ENCODE measurements at regions of chr13 and their contacts with region 1.

Region 1: DNA sequence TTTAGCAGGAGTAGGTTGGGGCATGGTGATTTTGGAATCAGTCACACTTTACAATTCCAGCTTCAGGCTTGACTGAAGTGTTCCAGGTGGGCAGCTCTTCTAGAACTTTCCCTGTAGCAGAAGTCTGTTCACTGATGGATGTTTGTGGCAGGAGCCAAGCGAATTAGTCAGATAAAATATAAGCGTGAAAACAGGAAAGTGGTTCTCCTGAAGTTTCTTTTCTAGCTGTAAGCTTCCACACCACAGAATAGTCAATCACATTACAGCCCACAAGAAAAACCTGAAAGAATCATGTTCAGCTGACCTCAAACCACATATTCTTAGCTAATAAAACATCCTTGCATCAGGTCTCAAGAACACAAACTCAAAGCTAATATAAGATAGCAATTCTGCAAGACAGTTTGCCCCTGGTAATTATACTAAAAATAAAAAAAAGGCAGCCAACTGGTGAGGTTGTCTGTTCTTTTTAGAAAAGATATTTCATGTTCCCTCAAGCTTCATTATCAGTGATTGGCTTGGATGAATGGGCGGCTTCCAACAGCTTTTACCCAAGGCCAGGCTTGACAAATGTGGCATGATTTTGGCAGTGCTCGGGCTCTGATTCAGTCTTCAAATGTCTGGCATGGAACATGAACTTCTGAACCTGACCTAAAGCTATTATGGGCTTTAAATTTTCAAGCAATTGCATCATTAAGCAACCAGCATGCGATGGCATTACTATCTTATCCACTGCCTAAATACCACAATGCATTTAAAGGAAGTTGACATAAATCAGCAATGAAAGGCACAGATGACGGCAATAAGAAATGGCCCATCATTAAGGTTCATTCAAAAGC is 136.8 kb downstream of the DCLK1 start:
- DNase-seq: no peak
- H3K4me3 ChIP-seq: no peak overlapping the region
- H3K27ac ChIP-seq: peak overlapping the region in 40 of 59 donors; percentile 2 to 84 (median 48)
- H3K27me3 ChIP-seq: peaks cover 0 to 3% (median 0%) of the 10 kb centered on the region in 45 donors
- CTCF ChIP-seq: no peak

Region 2: GRCh38 chr13:36275190-36276002 is 281.0 kb after region 1 on chr13:
- intact Hi-C with region 1: loop called in 1 of 2 experiments (anchors 5 kb)
- DNase-seq: peak in 1 of 10 donors; percentile 21
- H3K4me3 ChIP-seq: peak overlapping the region in 4 of 59 donors; percentile 2 to 33 (median 19)
- H3K27ac ChIP-seq: no peak overlapping the region
- H3K27me3 ChIP-seq: no peaks in the 10 kb centered on the region
- CTCF ChIP-seq: peak; percentile 40 to 77 (median 65)